CD4-positive, alpha-beta memory T cell (primary cell): ENCODE measurements at regions of chr4 and their contacts with region 1.

Region 1: GRCh38 chr4:183335369-183335940 is 13.2 kb upstream of the CLDN24 start:
- DNase-seq: no peak
- H3K4me3 ChIP-seq: no peak overlapping the region
- H3K4me3 Mint-ChIP-seq: no peak overlapping the region
- H3K27ac ChIP-seq: no peak overlapping the region
- H3K27ac Mint-ChIP-seq: no peak overlapping the region
- H3K4me1 ChIP-seq: no peaks in the 10 kb centered on the region
- H3K4me1 Mint-ChIP-seq: peaks cover 0 to 6% (median 0%) of the 10 kb centered on the region in 4 donors
- H3K27me3 ChIP-seq: no peaks in the 10 kb centered on the region
- H3K27me3 Mint-ChIP-seq: peaks cover 4 to 13% of the 10 kb centered on the region in 2 donors

Region 2: GRCh38 chr4:183354217-183354616 is 18.8 kb after region 1 on chr4:
- CTCF ChIA-PET with region 1: no interaction called
- POLR2A ChIA-PET with region 1: no interaction called
- intact Hi-C with region 1: loop called (anchors 1 kb)
- DNase-seq: no peak
- H3K4me3 ChIP-seq: no peak overlapping the region
- H3K4me3 Mint-ChIP-seq: no peak overlapping the region
- H3K27ac ChIP-seq: no peak overlapping the region
- H3K27ac Mint-ChIP-seq: no peak overlapping the region
- H3K4me1 ChIP-seq: no peaks in the 10 kb centered on the region
- H3K4me1 Mint-ChIP-seq: peaks cover 2 to 9% (median 4%) of the 10 kb centered on the region in 4 donors
- H3K27me3 ChIP-seq: no peaks in the 10 kb centered on the region
- H3K27me3 Mint-ChIP-seq: peaks cover 12 to 24% of the 10 kb centered on the region in 2 donors

Region 3: GRCh38 chr4:183398227-183399125 is 63.0 kb after region 1 on chr4:
- CTCF ChIA-PET with region 1: no interaction called
- POLR2A ChIA-PET with region 1: no interaction called
- intact Hi-C with region 1: no loop called
- DNase-seq: peak; percentile 49 to 57 (median 52)
- H3K4me3 ChIP-seq: peak overlapping the region; percentile 64 to 76
- H3K4me3 Mint-ChIP-seq: peak overlapping the region; percentile 86 to 97 (median 93)
- H3K27ac ChIP-seq: peak overlapping the region; percentile 25
- H3K27ac Mint-ChIP-seq: peak overlapping the region in 6 of 7 donors; percentile 48 to 93 (median 80)
- H3K4me1 ChIP-seq: peaks cover 5% of the 10 kb centered on the region
- H3K4me1 Mint-ChIP-seq: peaks cover 6 to 23% (median 15%) of the 10 kb centered on the region in 4 donors
- H3K27me3 ChIP-seq: no peaks in the 10 kb centered on the region
- H3K27me3 Mint-ChIP-seq: peaks cover 1 to 7% of the 10 kb centered on the region in 2 donors

Region 4: GRCh38 chr4:183444214-183445066 is 109.0 kb after region 1 on chr4 and contains the start of gene CDKN2AIP:
- CTCF ChIA-PET with region 1: no interaction called
- POLR2A ChIA-PET with region 1: no interaction called
- intact Hi-C with region 1: no loop called
- DNase-seq: peak; percentile 93 to 96 (median 96)
- H3K4me3 ChIP-seq: peak within 1 kb of the TSS; percentile 77 to 85
- H3K4me3 Mint-ChIP-seq: peak within 1 kb of the TSS; percentile 92 to 99 (median 98)
- H3K27ac ChIP-seq: peak within 1 kb of the TSS; percentile 96
- H3K27ac Mint-ChIP-seq: peak within 1 kb of the TSS; percentile 96 to 99 (median 98)
- H3K4me1 ChIP-seq: peaks cover 52% of the 10 kb centered on the region
- H3K4me1 Mint-ChIP-seq: peaks cover 32 to 63% (median 43%) of the 10 kb centered on the region in 4 donors
- H3K27me3 ChIP-seq: no peaks in the 10 kb centered on the region
- H3K27me3 Mint-ChIP-seq: no peaks in the 10 kb centered on the region
- total RNA-seq, gene CDKN2AIP: 48.3 to 51.1 TPM